Transverse colon (tissue), 4 donors: ENCODE measurements at regions of chr3 and their contacts with region 1.

Region 1: GRCh38 chr3:155870133-155870944 is at the start of gene GMPS:
- DNase-seq: peak; percentile 96
- H3K4me3 ChIP-seq: peak within 1 kb of the TSS; percentile 94 to 99 (median 96)
- H3K27ac ChIP-seq: peak within 1 kb of the TSS; percentile 97 to 98 (median 98)
- H3K4me1 ChIP-seq: peaks cover 4 to 25% (median 20%) of the 10 kb centered on the region in 4 donors
- H3K27me3 ChIP-seq: no peaks in the 10 kb centered on the region
- CTCF ChIP-seq: peak; percentile 29 to 58 (median 46)
- EP300 ChIP-seq: no peak
- POLR2A ChIP-seq: peak; percentile 73
- total RNA-seq, gene GMPS: 3.0 to 45.2 (median 20.4) TPM

Region 2: DNA sequence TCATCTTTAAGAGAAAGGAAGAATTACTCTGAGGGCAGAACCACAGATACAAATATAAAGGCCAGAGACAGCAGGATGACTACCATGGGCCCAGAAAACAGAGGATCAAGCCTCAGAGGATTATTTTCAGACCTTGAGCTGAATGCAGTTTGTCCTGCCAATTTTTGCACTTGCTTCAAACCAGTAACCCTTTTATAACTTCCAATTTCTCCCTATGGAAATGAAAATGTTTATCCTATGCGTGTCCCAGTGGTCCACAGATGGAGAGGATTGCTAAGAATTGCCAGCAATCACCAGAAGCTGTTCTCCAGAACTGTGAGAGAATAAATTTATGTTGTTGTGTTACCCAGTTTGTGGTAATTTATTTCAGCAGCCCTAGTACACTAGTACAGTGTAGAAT is 816.6 kb before region 1 on chr3:
- in situ Hi-C with region 1: no loop called
- intact Hi-C with region 1: no loop called
- DNase-seq: no peak
- H3K4me3 ChIP-seq: no peak overlapping the region
- H3K27ac ChIP-seq: no peak overlapping the region
- H3K4me1 ChIP-seq: no peaks in the 10 kb centered on the region
- H3K27me3 ChIP-seq: no peaks in the 10 kb centered on the region
- CTCF ChIP-seq: no peak
- EP300 ChIP-seq: no peak
- POLR2A ChIP-seq: no peak

Region 3: GRCh38 chr3:155805802-155806618 is 64.3 kb before region 1 on chr3 and contains the start of gene C3orf33:
- in situ Hi-C with region 1: no loop called
- intact Hi-C with region 1: loop called (anchors 5 kb)
- DNase-seq: peak; percentile 80
- H3K4me3 ChIP-seq: peak within 1 kb of the TSS; percentile 52 to 79 (median 59)
- H3K27ac ChIP-seq: peak within 1 kb of the TSS; percentile 74 to 81 (median 80)
- H3K4me1 ChIP-seq: peaks cover 0 to 10% (median 0%) of the 10 kb centered on the region in 4 donors
- H3K27me3 ChIP-seq: no peaks in the 10 kb centered on the region
- CTCF ChIP-seq: peak in 4 of 5 experiments; percentile 84 to 88 (median 84)
- EP300 ChIP-seq: no peak
- POLR2A ChIP-seq: no peak
- total RNA-seq, gene C3orf33: 1.5 to 3.7 TPM in 2 of 4 donors, not detected in the others

Region 4: GRCh38 chr3:155854141-155854940 is 16.0 kb before region 1 on chr3 and contains the start of gene SLC33A1:
- in situ Hi-C with region 1: no loop called
- intact Hi-C with region 1: loop called (anchors 2 kb)
- DNase-seq: peak; percentile 99
- H3K4me3 ChIP-seq: peak within 1 kb of the TSS; percentile 45 to 91 (median 78)
- H3K27ac ChIP-seq: peak within 1 kb of the TSS; percentile 91 to 97 (median 94)
- H3K4me1 ChIP-seq: peaks cover 25 to 47% (median 33%) of the 10 kb centered on the region in 4 donors
- H3K27me3 ChIP-seq: no peaks in the 10 kb centered on the region
- CTCF ChIP-seq: peak in 1 of 5 experiments; percentile 6
- EP300 ChIP-seq: no peak
- POLR2A ChIP-seq: peak; percentile 84
- total RNA-seq, gene SLC33A1: 13.3 to 34.8 (median 32.7) TPM

Region 5: GRCh38 chr3:157159762-157160657 is 1289.7 kb after region 1 on chr3 and contains the start of gene CCNL1:
- in situ Hi-C with region 1: loop called in 1 of 4 experiments (anchors 25 kb)
- intact Hi-C with region 1: no loop called
- DNase-seq: peak; percentile 98
- H3K4me3 ChIP-seq: peak within 1 kb of the TSS; percentile 79 to 99 (median 90)
- H3K27ac ChIP-seq: peak within 1 kb of the TSS; percentile 98 to 100 (median 100)
- H3K4me1 ChIP-seq: peaks cover 41 to 75% (median 51%) of the 10 kb centered on the region in 4 donors
- H3K27me3 ChIP-seq: no peaks in the 10 kb centered on the region
- CTCF ChIP-seq: peak in 2 of 5 experiments; percentile 24 to 27
- EP300 ChIP-seq: peak; percentile 90
- POLR2A ChIP-seq: peak; percentile 100
- total RNA-seq, gene CCNL1: 288 to 422 (median 308) TPM